ENCODE measurements at regions of chr17 and their contacts with region 1.

Region 1: GRCh38 chr17:81294856-81295680 is at the start of gene SLC38A10:
- H3K4me3 ChIP-seq: peak within 1 kb of the TSS; percentile 85
- H3K27ac ChIP-seq: peak within 1 kb of the TSS; percentile 39
- H3K4me1 ChIP-seq: peaks cover 2% of the 10 kb centered on the region; the same call in 1 of the 2 replicates
- CTCF ChIP-seq: no peak

Region 2: DNA sequence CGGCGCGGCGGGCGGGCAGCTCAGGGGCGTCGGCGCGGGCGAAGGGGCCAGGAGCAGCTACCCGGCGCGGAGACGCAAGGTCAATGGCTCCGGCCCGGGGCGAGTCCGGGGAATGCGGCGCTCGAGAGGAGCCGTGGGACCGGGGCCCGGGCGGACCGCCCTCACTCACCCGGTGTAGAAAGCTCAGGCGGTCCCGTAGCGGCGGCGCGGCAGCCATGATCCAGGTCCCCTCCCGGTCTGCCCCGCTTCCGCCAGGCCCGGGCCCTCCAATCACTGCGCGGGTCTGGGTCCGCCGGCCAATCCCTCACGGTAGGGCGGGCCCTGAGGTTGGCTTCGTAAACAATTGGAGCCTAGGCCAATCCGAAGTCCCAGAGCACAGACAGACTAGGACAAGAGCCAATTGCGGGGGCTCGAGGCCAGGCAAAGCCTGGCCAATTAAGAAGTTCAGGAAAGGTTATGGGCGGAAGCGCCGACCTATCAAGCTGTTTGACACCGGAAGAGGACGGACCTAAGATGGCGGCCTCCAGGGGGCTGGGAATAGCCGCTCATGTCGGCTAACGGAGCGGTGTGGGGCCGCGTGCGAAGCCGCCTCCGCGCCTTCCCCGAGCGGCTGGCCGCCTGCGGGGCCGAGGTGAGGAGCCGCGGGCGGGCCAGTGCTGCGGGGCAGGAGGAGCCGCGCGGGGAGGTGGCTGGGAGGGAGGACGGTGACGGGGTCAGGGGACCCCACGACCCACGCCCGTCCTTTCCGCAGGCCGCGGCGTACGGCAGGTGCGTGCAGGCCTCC is 56.1 kb before region 1 on chr17 and contains the starts of genes NDUFAF8 and TEPSIN:
- CTCF ChIA-PET with region 1: no interaction called
- POLR2A ChIA-PET with region 1: no interaction called
- H3K4me3 ChIP-seq: peak within 1 kb of the TSS; percentile 86
- H3K27ac ChIP-seq: peak within 1 kb of the TSS; percentile 92
- H3K4me1 ChIP-seq: peaks cover 8% of the 10 kb centered on the region
- CTCF ChIP-seq: no peak

Region 3: DNA sequence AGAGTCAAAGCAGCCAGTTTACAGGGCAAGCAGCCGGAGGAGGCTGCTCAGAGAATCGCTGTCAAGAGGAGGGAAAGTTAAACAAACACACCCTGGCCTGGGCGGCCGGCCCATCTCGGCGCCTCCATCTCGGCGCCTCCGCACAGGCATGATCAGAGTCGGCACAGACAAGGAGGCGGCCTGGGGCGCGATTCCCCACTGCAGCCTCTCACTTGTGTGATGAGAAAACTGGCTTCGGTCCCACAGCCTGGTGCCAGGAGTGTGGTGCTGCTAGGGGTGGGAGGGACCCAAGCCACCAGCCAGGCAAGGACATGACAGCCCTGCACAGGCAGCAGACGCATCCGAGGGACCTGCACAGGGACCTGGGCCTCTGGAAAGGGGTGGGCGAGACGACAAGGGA is 17.6 kb before region 1 on chr17:
- CTCF ChIA-PET with region 1: interaction called, 12 read pairs
- POLR2A ChIA-PET with region 1: no interaction called
- H3K4me3 ChIP-seq: no peak overlapping the region
- H3K27ac ChIP-seq: no peak overlapping the region
- H3K4me1 ChIP-seq: no peaks in the 10 kb centered on the region
- CTCF ChIP-seq: no peak

Region 4: DNA sequence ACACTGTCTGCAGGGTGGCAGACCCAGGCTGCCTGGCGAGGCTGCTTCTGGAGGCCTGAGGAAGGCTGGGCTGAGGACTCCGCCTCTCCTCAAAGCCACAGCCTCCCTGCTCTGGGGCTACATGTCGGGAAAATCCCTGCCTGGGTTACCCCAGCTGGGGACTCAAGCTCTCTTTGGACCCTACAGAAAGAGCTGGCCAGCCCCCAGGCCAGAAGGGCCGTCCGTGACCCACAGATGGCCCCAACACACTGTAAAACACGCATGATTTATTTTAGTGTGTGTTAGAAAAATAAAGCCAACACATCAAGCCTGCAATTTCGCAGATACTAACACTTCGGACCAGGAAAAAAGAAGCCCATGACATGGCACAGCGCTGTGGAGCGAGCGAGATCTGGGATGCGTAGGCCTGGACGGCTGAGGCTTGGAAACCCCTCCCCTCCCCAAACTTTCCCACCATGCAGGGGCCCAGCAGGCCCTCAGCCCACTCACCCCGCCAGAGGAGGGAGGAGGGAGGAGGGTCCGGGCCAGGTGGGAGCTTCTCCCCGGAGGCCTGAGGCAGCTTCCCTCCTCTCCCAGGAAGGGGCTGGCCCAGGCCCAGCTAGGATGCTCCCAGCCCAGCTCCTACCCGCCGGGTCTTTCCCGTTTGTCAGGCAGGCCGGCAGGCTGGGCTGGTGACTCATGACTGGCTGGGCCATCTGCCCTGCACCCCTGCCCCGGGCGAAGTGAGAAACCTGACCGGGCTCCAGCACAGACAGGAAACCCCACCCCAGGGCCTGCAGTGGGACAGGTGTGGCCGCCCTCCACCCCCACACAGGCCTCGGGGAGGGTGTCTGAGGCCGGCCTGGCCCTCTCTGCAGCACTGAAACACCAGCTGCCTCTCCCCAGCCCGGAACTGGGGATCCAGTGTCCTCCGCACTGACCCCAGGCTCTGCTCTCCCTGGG is 34.2 kb after region 1 on chr17:
- CTCF ChIA-PET with region 1: interaction called, 6 read pairs
- POLR2A ChIA-PET with region 1: interaction called, 10 read pairs
- H3K4me3 ChIP-seq: no peak overlapping the region
- H3K27ac ChIP-seq: peak overlapping the region; percentile 91
- H3K4me1 ChIP-seq: peaks cover 16% of the 10 kb centered on the region
- CTCF ChIP-seq: no peak

Region 5: DNA sequence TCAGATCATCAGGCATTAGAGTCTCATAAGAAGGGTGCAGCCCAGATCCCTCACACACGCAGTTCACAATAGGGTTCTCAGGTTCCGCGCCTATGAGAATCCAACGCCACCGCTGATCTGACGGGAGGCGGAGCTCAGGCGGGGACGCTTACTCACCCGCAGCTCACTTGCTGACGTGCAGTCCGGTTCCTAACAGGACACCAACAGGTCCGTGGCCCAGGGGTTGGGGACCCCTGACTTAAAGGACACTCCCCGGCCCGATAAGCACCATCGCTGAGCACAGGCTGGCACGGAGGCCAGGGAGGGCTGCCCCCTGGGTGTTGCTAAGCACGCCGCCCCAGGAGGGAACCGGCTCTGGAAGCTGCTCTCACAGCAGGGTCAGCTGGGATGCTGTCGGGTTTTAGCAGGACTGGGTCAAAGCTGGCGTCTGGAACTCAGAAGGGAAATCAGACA is 70.1 kb after region 1 on chr17:
- CTCF ChIA-PET with region 1: interaction called, 4 read pairs
- POLR2A ChIA-PET with region 1: interaction called, 13 read pairs
- H3K4me3 ChIP-seq: no peak overlapping the region
- H3K27ac ChIP-seq: 0 out of 2 replicates have a peak overlapping the region, but pooled peaks have one; percentile 30
- H3K4me1 ChIP-seq: peaks cover 4% of the 10 kb centered on the region; the same call in 1 of the 2 replicates
- CTCF ChIP-seq: no peak

Region 6: DNA sequence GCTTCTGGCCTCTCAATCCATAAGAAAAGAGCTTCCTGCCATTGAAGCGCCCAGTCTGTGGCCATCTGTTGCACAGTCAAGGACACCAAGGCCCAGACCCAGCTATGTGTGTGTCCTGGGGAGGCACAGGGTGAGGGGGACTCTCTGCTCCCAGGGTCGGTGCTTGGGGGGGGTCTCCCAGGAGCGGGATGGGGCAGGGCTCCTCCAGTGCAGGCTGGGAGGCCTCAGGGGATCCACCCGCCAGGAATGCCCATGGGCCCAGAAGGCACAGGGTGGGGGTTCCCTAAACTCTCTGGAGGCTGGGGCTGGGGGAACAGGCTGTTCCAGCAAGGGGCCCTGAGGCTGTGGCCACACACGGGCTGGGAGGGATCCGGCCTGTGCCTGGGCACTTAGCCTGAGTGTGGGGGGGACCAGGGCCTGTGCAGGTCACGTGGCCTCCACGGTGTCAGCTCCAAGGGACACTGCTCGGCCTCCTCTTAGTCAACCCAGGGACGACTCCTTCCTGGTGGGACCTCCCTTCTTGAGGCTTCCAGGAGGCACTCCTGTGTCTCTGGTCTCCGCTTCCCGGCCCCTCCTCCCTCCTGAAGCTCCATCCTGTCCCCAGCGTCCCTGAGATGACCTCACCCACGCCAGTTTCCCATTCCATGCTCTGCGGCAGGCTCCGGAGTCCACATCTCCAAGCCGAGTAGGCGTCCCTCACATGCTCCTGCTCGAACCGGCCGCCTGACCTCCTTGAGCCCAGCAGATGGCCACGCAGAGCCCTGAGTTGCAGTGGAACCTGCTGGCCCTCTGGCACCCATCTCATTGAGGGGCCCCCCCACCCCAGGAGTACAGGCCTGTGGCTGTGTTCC is 77.1 kb after region 1 on chr17:
- CTCF ChIA-PET with region 1: interaction called, 12 read pairs
- POLR2A ChIA-PET with region 1: interaction called, 4 read pairs
- H3K4me3 ChIP-seq: no peak overlapping the region
- H3K27ac ChIP-seq: no peak overlapping the region
- H3K4me1 ChIP-seq: no peaks in the 10 kb centered on the region
- CTCF ChIP-seq: peak; percentile 64; the same call in 1 of the 2 replicates

Region 7: DNA sequence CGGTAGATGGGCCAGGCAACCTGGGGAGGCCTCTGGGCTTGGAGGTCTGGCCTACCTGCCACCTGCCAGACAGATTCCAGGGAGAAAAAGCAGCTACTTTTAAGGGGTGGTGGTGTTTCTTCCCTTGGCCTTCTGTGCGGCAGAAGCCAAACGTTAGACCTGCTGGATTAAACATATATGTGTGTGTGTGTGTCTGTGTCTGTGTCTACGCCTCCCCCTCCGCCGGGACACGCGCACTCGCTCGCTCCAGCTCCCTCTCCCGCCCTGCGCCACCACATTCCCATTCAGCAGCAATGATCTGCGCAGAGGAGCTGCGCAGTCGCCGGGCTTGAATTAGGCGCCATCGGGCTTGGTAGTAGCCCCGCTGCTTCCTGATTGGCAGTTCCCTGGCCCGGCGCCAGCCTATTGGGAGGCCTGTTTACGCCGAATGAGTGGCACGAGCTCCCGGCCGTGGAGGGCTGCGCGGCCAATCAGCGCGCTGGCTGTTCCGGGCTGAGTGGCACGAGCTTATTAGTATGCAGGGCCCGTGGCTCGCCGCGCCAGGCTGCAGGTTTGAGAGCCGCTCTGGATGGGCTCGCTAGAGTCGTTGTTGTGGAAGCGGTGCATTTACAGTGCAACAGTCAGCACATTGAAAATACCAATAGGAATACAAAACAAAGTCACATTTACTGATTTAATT is 100.0 kb after region 1 on chr17 and contains the start of gene BAHCC1:
- CTCF ChIA-PET with region 1: interaction called, 14 read pairs
- POLR2A ChIA-PET with region 1: interaction called, 20 read pairs
- H3K4me3 ChIP-seq: peak within 1 kb of the TSS; percentile 92
- H3K27ac ChIP-seq: peak within 1 kb of the TSS; percentile 100
- H3K4me1 ChIP-seq: peaks cover 23% of the 10 kb centered on the region
- CTCF ChIP-seq: peak; percentile 32; the same call in 1 of the 2 replicates

Region 8: GRCh38 chr17:81419328-81419885 is 124.3 kb after region 1 on chr17:
- CTCF ChIA-PET with region 1: no interaction called
- POLR2A ChIA-PET with region 1: interaction called, 12 read pairs
- H3K4me3 ChIP-seq: peak overlapping the region; percentile 25
- H3K27ac ChIP-seq: peak overlapping the region; percentile 81
- H3K4me1 ChIP-seq: peaks cover 16% of the 10 kb centered on the region
- CTCF ChIP-seq: no peak